RWPE1 (cell line): ENCODE measurements at regions of chr1 and their contacts with region 1.

Region 1: GRCh38 chr1:186806477-186806876 is 22.3 kb upstream of the PLA2G4A start:
- DNase-seq: peak; percentile 54
- H3K27ac ChIP-seq: no peak overlapping the region
- CTCF ChIP-seq: 0 out of 2 replicates have a peak, but pooled peaks have one; percentile 12

Region 2: GRCh38 chr1:186605762-186606350 is 200.6 kb before region 1 on chr1:
- CTCF ChIA-PET with region 1: interaction called, 13 read pairs
- POLR2A ChIA-PET with region 1: no interaction called
- DNase-seq: peak; percentile 35
- H3K27ac ChIP-seq: no peak overlapping the region
- CTCF ChIP-seq: peak; percentile 72

Region 3: DNA sequence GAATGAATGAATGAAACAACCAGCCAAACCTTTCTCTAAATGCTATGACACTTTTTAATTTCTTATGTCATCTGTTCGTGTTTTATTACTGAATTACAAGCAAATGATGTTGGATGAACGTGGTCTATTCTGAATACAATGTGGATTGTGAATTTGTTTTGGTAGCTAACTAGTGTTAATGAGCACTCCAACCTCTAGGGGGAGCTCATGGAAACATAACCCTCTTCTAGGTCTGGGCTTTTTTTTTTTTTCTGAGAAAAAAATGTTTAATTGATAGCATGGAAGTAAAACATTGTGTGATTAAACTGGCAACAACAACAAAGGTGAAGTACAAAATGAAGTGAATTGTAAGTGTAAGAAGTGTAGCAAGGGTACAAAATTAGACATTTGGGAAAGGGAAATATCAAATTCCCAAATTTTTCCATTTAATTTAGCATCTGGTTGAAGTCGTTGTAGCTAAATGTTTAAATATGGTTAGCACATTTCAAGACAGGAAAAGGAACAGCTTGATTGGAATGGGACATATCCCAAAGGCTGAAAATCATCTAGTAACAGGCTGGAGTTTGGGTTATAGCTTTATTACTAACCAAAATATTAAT is 83.7 kb before region 1 on chr1:
- CTCF ChIA-PET with region 1: interaction called, 10 read pairs
- POLR2A ChIA-PET with region 1: no interaction called
- DNase-seq: peak; percentile 55
- H3K27ac ChIP-seq: no peak overlapping the region
- CTCF ChIP-seq: peak; percentile 43